Naive thymus-derived CD4-positive, alpha-beta T cell (primary cell): ENCODE measurements at regions of chr7 and their contacts with region 1.

Region 1: DNA sequence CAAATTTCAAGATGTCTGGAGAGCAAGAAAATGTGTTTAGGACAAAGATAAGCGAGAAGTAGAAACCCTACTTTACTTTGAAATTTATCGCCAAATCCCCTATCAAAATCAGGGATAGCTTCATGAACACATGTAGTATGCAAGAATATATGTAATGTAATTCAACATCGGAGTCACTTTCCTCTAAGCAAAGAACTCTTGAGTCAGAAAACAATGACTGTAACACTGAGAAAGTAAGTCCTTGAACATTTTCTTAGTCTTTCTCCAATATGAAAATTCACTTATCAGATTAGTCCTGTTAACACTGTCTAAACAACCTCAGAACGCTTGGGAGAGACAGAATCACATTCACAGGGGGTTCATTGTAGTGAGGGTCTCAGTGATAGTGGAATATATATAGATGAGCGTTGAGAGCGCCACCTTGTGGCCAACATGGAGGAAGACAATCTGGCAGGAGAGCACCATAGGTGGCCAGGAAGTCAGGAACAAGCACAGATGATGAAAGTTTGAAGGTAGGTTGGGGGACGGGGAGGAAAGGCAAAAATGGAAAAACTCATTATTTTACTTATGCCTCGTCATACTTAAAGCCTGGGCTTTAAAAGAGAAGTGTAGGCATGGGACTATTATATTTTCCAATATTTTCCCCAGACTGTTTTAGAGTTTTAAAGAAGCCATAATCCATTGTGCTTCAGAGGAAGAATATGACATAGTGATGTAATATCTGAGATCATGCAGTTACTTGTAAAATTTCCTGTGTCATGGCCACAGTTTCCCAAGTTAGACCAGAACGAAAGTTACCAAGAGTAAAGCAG is 115.5 kb upstream of the GNAI1 start:
- DNase-seq: peak in 8 of 9 donors; percentile 8 to 50 (median 26)
- ATAC-seq: peak; percentile 58
- H3K4me3 ChIP-seq: no peak overlapping the region
- H3K4me3 Mint-ChIP-seq: no peak overlapping the region
- H3K27ac ChIP-seq: no peak overlapping the region
- H3K27ac Mint-ChIP-seq: no peak overlapping the region
- H3K4me1 ChIP-seq: no peaks in the 10 kb centered on the region
- H3K4me1 Mint-ChIP-seq: no peaks in the 10 kb centered on the region
- H3K27me3 ChIP-seq: no peaks in the 10 kb centered on the region
- H3K27me3 Mint-ChIP-seq: no peaks in the 10 kb centered on the region

Region 2: GRCh38 chr7:78020136-78020873 is 1998.8 kb before region 1 on chr7:
- CTCF ChIA-PET with region 1: no interaction called
- POLR2A ChIA-PET with region 1: no interaction called
- intact Hi-C with region 1: loop called in 1 of 2 experiments (anchors 1 kb)
- DNase-seq: peak in 5 of 9 donors; percentile 18 to 44 (median 25)
- ATAC-seq: peak; percentile 63
- H3K4me3 ChIP-seq: peak overlapping the region; percentile 31
- H3K4me3 Mint-ChIP-seq: peak overlapping the region; percentile 72 to 88 (median 83)
- H3K27ac ChIP-seq: no peak overlapping the region
- H3K27ac Mint-ChIP-seq: peak overlapping the region in 2 of 9 donors; percentile 28 to 56
- H3K4me1 ChIP-seq: peaks cover 0 to 7% of the 10 kb centered on the region in 2 donors
- H3K4me1 Mint-ChIP-seq: peaks cover 6 to 15% (median 11%) of the 10 kb centered on the region in 7 donors
- H3K27me3 ChIP-seq: peaks cover 0 to 13% of the 10 kb centered on the region in 2 donors
- H3K27me3 Mint-ChIP-seq: peaks cover 17 to 53% (median 39%) of the 10 kb centered on the region in 5 donors

Region 3: GRCh38 chr7:79272066-79272669 is 747.0 kb before region 1 on chr7:
- CTCF ChIA-PET with region 1: no interaction called
- POLR2A ChIA-PET with region 1: no interaction called
- intact Hi-C with region 1: loop called in 1 of 2 experiments (anchors 1 kb)
- DNase-seq: peak in 2 of 9 donors; percentile 15 to 22
- ATAC-seq: no peak
- H3K4me3 ChIP-seq: no peak overlapping the region
- H3K4me3 Mint-ChIP-seq: no peak overlapping the region
- H3K27ac ChIP-seq: no peak overlapping the region
- H3K27ac Mint-ChIP-seq: no peak overlapping the region
- H3K4me1 ChIP-seq: no peaks in the 10 kb centered on the region
- H3K4me1 Mint-ChIP-seq: no peaks in the 10 kb centered on the region
- H3K27me3 ChIP-seq: no peaks in the 10 kb centered on the region
- H3K27me3 Mint-ChIP-seq: no peaks in the 10 kb centered on the region

Region 4: GRCh38 chr7:79298145-79298760 is 720.9 kb before region 1 on chr7:
- CTCF ChIA-PET with region 1: no interaction called
- POLR2A ChIA-PET with region 1: no interaction called
- intact Hi-C with region 1: loop called (anchors 1 to 10 kb)
- DNase-seq: no peak
- ATAC-seq: no peak
- H3K4me3 ChIP-seq: no peak overlapping the region
- H3K4me3 Mint-ChIP-seq: no peak overlapping the region
- H3K27ac ChIP-seq: no peak overlapping the region
- H3K27ac Mint-ChIP-seq: no peak overlapping the region
- H3K4me1 ChIP-seq: no peaks in the 10 kb centered on the region
- H3K4me1 Mint-ChIP-seq: no peaks in the 10 kb centered on the region
- H3K27me3 ChIP-seq: no peaks in the 10 kb centered on the region
- H3K27me3 Mint-ChIP-seq: no peaks in the 10 kb centered on the region

Region 5: DNA sequence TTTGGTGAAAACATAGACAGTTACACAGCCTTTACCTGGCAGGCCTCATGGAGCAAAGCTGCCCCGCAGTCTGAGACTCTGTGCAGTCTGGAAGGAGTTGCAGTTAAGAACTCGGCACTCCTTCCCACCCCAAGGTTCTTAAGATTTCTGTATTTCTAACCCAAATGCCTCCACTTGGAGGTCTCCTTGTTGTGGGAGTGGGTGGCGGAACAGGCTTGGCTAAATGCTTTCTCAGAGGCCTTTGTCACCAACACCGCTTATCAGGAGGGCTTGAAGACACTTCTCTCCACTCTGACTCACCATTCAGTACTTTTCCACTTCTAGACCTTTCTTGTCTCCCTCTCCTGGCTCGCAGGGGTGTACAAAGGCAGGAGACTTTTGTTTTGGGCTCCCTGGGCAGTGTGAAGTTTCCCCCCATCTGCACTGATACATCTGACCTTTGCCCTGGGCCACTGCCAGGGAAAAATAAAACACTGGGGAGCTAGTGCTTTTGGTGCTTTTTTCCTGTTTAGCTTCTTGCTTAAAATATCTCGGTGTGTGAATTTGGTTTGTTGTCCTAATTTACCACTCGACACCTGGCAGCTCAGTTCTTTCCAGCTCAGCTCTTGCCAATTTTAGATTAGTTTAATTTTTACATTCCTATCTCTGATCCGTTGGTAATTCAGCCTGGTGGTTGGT is 514.3 kb before region 1 on chr7:
- CTCF ChIA-PET with region 1: no interaction called
- POLR2A ChIA-PET with region 1: no interaction called
- intact Hi-C with region 1: loop called in 1 of 2 experiments (anchors 2 kb)
- DNase-seq: peak in 1 of 9 donors; percentile 0
- ATAC-seq: no peak
- H3K4me3 ChIP-seq: no peak overlapping the region
- H3K4me3 Mint-ChIP-seq: no peak overlapping the region
- H3K27ac ChIP-seq: no peak overlapping the region
- H3K27ac Mint-ChIP-seq: peak overlapping the region in 1 of 9 donors; percentile 9
- H3K4me1 ChIP-seq: no peaks in the 10 kb centered on the region
- H3K4me1 Mint-ChIP-seq: no peaks in the 10 kb centered on the region
- H3K27me3 ChIP-seq: no peaks in the 10 kb centered on the region
- H3K27me3 Mint-ChIP-seq: no peaks in the 10 kb centered on the region

Region 6: DNA sequence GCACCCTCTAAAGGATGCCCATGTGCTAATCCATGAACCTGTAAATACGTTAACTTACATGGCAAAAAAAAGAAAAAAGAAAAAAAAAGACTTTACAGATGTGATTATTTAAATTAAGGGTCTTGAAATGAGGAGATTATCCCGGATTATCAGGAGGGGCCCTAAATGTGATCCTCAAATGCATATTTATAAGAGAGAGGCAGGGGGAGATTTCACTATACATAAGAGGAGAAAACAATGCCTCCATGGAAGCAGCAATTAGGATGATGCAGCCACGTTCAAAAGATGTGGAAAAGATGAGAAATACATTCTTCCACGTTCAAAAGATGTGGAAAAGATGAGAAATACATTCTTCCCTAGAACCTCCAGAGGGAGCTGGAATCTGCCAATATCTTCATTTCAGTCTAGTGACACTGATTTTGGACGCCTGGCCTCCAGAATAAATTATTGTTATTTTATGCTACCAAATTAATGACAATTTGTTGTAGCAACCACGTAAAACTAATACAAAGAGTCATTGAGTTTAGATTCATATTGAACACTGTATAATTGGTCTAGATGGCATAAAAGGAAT is 212.9 kb before region 1 on chr7:
- CTCF ChIA-PET with region 1: no interaction called
- POLR2A ChIA-PET with region 1: no interaction called
- intact Hi-C with region 1: loop called (anchors 1 to 2 kb)
- DNase-seq: no peak
- ATAC-seq: no peak
- H3K4me3 ChIP-seq: no peak overlapping the region
- H3K4me3 Mint-ChIP-seq: no peak overlapping the region
- H3K27ac ChIP-seq: no peak overlapping the region
- H3K27ac Mint-ChIP-seq: no peak overlapping the region
- H3K4me1 ChIP-seq: no peaks in the 10 kb centered on the region
- H3K4me1 Mint-ChIP-seq: no peaks in the 10 kb centered on the region
- H3K27me3 ChIP-seq: no peaks in the 10 kb centered on the region
- H3K27me3 Mint-ChIP-seq: no peaks in the 10 kb centered on the region

Region 7: GRCh38 chr7:80563561-80564327 is 544.6 kb after region 1 on chr7:
- CTCF ChIA-PET with region 1: no interaction called
- POLR2A ChIA-PET with region 1: no interaction called
- intact Hi-C with region 1: no loop called
- DNase-seq: no peak
- ATAC-seq: no peak
- H3K4me3 ChIP-seq: no peak overlapping the region
- H3K4me3 Mint-ChIP-seq: no peak overlapping the region
- H3K27ac ChIP-seq: no peak overlapping the region
- H3K27ac Mint-ChIP-seq: no peak overlapping the region
- H3K4me1 ChIP-seq: no peaks in the 10 kb centered on the region
- H3K4me1 Mint-ChIP-seq: peaks cover 0 to 2% (median 0%) of the 10 kb centered on the region in 7 donors
- H3K27me3 ChIP-seq: no peaks in the 10 kb centered on the region
- H3K27me3 Mint-ChIP-seq: peaks cover 0 to 5% (median 0%) of the 10 kb centered on the region in 5 donors